Activated CD8-positive, alpha-beta memory T cell treated with anti-CD3 and anti-CD28 coated beads, Interleukin-2, amount 10 ng/mL, durations not matched to agents 7 days and 5 days (primary cell): ENCODE measurements at regions of chrX and their contacts with region 1.

Region 1: GRCh38 chrX:25020905-25021449 is 5.2 kb upstream of the ARX start:
- DNase-seq: peak; percentile 45
- ATAC-seq: peak; percentile 76
- H3K4me3 Mint-ChIP-seq: no peak overlapping the region
- H3K27ac Mint-ChIP-seq: no peak overlapping the region
- H3K4me1 Mint-ChIP-seq: peaks cover 12% of the 10 kb centered on the region
- H3K27me3 Mint-ChIP-seq: peaks cover 84% of the 10 kb centered on the region

Region 2: GRCh38 chrX:25067271-25068172 is 46.5 kb after region 1 on chrX:
- CTCF ChIA-PET with region 1: interaction called, 15 read pairs
- DNase-seq: no peak
- ATAC-seq: peak; percentile 78
- H3K4me3 Mint-ChIP-seq: peak overlapping the region; percentile 53
- H3K27ac Mint-ChIP-seq: peak overlapping the region; percentile 79
- H3K4me1 Mint-ChIP-seq: peaks cover 18% of the 10 kb centered on the region
- H3K27me3 Mint-ChIP-seq: peaks cover 2% of the 10 kb centered on the region

Region 3: GRCh38 chrX:25144043-25144940 is 123.3 kb after region 1 on chrX:
- CTCF ChIA-PET with region 1: interaction called, 15 read pairs
- DNase-seq: peak; percentile 39
- ATAC-seq: no peak
- H3K4me3 Mint-ChIP-seq: no peak overlapping the region
- H3K27ac Mint-ChIP-seq: no peak overlapping the region
- H3K4me1 Mint-ChIP-seq: no peaks in the 10 kb centered on the region
- H3K27me3 Mint-ChIP-seq: peaks cover 17% of the 10 kb centered on the region